GM18951 (cell line): ENCODE measurements at regions of chr13 and their contacts with region 1.

Region 1: DNA sequence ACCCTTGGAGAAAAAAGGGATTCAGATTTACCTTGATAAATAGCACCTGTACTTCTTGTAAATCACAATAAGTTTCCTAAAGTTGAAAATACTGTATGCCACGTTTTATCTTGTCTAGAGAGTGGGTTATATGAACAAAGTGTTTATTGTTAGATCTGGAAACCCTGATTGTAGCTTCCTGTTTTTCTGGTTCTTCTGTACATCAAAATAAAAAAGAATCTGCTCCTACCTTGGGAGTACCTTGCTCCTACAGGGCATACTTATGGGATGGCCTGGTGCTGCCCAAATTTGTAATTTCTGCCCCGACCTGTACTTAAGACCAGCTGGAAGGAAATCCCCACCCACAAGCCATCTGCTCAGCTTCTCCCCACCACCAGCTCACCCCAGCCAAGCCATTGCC is 241.1 kb downstream of the SLC7A1 start:
- POLR2A ChIP-seq: no peak

Region 2: GRCh38 chr13:28408235-28408848 is 946.0 kb before region 1 on chr13:
- in situ Hi-C with region 1: no loop called
- POLR2A ChIP-seq: no peak

Region 3: GRCh38 chr13:28735481-28736029 is 618.8 kb before region 1 on chr13:
- in situ Hi-C with region 1: no loop called
- POLR2A ChIP-seq: no peak

Region 4: GRCh38 chr13:29210676-29211075 is 143.7 kb before region 1 on chr13:
- in situ Hi-C with region 1: loop called (anchors 5 kb)
- POLR2A ChIP-seq: no peak

Region 5: DNA sequence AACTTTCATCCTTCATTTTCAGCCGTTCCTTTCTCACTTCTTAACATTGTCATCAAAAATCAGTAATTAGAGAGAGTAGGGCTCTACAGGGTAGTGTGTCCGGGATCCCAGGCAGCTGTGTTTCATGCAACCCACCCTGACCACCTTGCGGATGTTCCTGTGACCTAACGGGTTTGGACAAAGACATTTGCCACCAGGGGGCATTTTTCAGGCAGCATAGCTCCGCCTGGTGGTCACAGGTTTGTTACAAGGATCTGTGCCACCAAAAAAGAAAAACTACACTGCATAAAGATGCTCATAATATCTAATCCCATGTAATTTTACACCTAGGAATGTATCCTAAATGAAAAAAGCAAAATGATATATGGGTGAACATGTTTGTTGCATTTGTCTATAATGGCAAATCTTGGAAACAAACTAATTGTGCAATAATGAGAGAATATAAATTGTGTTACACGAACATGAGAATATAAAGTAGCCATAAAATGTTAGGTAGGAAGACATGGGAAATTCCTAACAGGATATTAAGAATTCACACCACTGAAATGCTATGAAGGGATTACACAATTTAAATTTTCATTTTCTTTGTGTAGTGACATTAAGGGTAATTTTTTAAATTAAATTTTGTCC is 118.1 kb after region 1 on chr13:
- in situ Hi-C with region 1: no loop called
- POLR2A ChIP-seq: no peak